GM10248 (cell line): ENCODE measurements at regions of chr4 and their contacts with region 1.

Region 1: GRCh38 chr4:40662962-40663604 is 33.4 kb upstream of the RBM47 start:
- DNase-seq: peak; percentile 40
- CTCF ChIP-seq: no peak

Region 2: GRCh38 chr4:40621592-40622512 is 41.2 kb before region 1 on chr4:
- CTCF ChIA-PET with region 1: no interaction called
- POLR2A ChIA-PET with region 1: no interaction called
- DNase-seq: peak; percentile 56
- CTCF ChIP-seq: no peak

Region 3: DNA sequence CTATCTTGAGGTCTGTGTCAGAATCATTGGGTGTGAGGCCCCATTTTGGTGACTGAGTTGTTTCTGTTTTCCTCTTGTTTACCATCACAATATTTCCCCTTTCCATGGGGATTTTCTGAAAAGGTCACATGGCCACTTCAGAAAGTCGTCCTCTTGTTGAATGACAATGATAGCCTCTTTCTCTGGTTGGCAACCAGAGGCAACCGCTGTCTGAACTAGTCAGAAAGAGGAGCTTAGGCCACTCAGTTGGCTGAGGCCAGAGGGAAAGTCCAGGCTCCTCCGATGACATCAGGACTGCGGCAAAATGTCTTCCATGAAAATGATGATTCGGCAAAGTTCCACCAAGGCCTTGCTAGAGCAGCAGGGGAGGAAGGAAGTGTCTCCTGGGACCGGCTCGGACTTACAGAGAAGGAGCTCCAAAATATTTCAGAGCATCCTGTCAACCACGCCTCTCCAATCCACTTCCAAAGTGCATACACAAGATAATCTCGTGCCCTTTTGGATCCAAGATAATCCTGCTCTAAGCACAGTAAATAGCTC is 14.3 kb before region 1 on chr4:
- CTCF ChIA-PET with region 1: interaction called, 19 read pairs
- POLR2A ChIA-PET with region 1: no interaction called
- DNase-seq: no peak
- CTCF ChIP-seq: no peak